CD8-positive, alpha-beta memory T cell (primary cell): ENCODE measurements at regions of chr12 and their contacts with region 1.

Region 1: GRCh38 chr12:93419388-93420034 is 22.2 kb downstream of the UBE2N start:
- DNase-seq: peak in 2 of 5 donors; percentile 38 to 47
- H3K4me3 ChIP-seq: no peak overlapping the region
- H3K4me3 Mint-ChIP-seq: no peak overlapping the region
- H3K27ac ChIP-seq: no peak overlapping the region
- H3K27ac Mint-ChIP-seq: peak overlapping the region in 5 of 8 donors; percentile 27 to 80 (median 55)
- H3K4me1 ChIP-seq: peaks cover 69% of the 10 kb centered on the region
- H3K4me1 Mint-ChIP-seq: peaks cover 74 to 96% (median 95%) of the 10 kb centered on the region in 3 donors
- H3K27me3 ChIP-seq: no peaks in the 10 kb centered on the region
- H3K27me3 Mint-ChIP-seq: no peaks in the 10 kb centered on the region

Region 2: GRCh38 chr12:92987362-92987761 is 432.1 kb before region 1 on chr12:
- CTCF ChIA-PET with region 1: interaction called, 36 read pairs
- POLR2A ChIA-PET with region 1: no interaction called
- DNase-seq: peak in 2 of 5 donors; percentile 41 to 51
- H3K4me3 ChIP-seq: no peak overlapping the region
- H3K4me3 Mint-ChIP-seq: peak overlapping the region in 1 of 7 donors; percentile 51
- H3K27ac ChIP-seq: no peak overlapping the region
- H3K27ac Mint-ChIP-seq: peak overlapping the region in 2 of 8 donors; percentile 27 to 82
- H3K4me1 ChIP-seq: peaks cover 8% of the 10 kb centered on the region
- H3K4me1 Mint-ChIP-seq: peaks cover 8 to 11% (median 10%) of the 10 kb centered on the region in 3 donors
- H3K27me3 ChIP-seq: no peaks in the 10 kb centered on the region
- H3K27me3 Mint-ChIP-seq: peaks cover 1 to 13% of the 10 kb centered on the region in 2 donors

Region 3: DNA sequence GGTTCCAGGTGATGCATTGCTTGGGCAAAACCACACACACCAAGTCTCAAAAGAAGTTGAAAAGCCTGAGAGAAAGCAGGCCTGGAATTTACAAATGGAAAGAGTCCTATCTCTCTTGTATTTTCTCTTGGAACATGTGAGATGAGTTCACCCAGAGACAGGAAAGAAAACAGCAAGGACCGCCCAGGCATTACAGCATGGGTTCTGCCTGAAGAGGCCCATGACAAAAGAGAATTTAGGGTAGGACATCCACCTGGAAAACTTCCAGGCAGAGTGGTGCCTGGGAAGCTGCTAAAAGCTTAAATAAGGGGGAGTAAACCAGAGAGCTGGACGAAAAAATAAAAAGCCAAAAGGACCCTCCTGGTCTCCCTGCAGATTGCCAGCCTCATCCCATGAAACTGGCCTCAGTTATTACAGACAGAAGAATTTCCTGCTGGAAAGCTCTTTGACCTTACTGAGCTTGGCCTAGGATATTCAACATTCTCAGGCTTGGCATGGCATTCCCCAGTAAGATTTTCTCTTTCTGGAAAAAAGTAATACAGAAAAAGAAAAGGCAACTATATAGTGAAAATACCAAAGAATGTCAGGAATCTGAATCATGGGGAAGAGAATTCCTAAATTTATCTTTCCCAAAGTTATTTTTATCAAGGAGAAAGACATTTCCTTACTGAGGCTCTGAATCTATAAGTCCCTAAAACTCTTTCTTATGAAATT is 163.1 kb before region 1 on chr12:
- CTCF ChIA-PET with region 1: no interaction called
- POLR2A ChIA-PET with region 1: no interaction called
- DNase-seq: no peak
- H3K4me3 ChIP-seq: no peak overlapping the region
- H3K4me3 Mint-ChIP-seq: no peak overlapping the region
- H3K27ac ChIP-seq: no peak overlapping the region
- H3K27ac Mint-ChIP-seq: no peak overlapping the region
- H3K4me1 ChIP-seq: no peaks in the 10 kb centered on the region
- H3K4me1 Mint-ChIP-seq: no peaks in the 10 kb centered on the region
- H3K27me3 ChIP-seq: no peaks in the 10 kb centered on the region
- H3K27me3 Mint-ChIP-seq: peaks cover 2 to 3% of the 10 kb centered on the region in 2 donors

Region 4: GRCh38 chr12:93368766-93369165 is 50.7 kb before region 1 on chr12:
- CTCF ChIA-PET with region 1: no interaction called
- POLR2A ChIA-PET with region 1: no interaction called
- DNase-seq: no peak
- H3K4me3 ChIP-seq: no peak overlapping the region
- H3K4me3 Mint-ChIP-seq: no peak overlapping the region
- H3K27ac ChIP-seq: no peak overlapping the region
- H3K27ac Mint-ChIP-seq: no peak overlapping the region
- H3K4me1 ChIP-seq: peaks cover 8% of the 10 kb centered on the region
- H3K4me1 Mint-ChIP-seq: peaks cover 6 to 12% (median 9%) of the 10 kb centered on the region in 3 donors
- H3K27me3 ChIP-seq: no peaks in the 10 kb centered on the region
- H3K27me3 Mint-ChIP-seq: peaks cover 2 to 4% of the 10 kb centered on the region in 2 donors

Region 5: DNA sequence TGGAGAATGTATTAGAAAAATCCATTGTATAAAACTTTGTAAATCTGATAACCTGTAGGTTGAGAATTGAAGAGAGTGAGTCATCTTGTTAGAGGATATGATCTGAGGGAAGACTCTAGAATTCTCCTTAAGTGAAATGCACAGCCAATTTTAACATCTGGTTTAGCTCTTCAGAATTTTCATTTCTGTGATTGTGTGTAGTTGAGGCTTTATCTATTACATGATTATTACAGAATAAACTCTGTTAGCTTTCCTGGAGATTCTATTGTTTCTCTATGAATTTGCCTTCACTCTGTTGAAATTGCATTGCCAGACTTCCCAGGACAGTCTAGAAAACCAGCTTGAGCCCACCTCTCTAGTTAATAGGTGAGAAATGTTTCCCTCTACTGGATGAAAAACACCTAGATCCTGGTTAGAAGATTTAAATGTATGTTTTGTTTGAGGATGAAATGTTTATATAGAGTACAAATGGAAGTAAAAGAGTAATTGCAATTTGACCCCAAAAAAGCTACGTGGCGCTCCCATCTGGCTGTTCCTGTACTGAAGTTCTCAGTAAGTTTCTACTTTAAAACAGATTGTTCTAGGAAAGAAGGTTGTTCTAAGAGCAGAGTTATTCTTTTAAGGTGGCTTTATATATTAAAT is 38.9 kb before region 1 on chr12:
- CTCF ChIA-PET with region 1: interaction called, 12 read pairs
- POLR2A ChIA-PET with region 1: no interaction called
- DNase-seq: no peak
- H3K4me3 ChIP-seq: peak overlapping the region; percentile 78
- H3K4me3 Mint-ChIP-seq: peak overlapping the region; percentile 93 to 100 (median 99)
- H3K27ac ChIP-seq: peak overlapping the region; percentile 93
- H3K27ac Mint-ChIP-seq: peak overlapping the region; percentile 30 to 99 (median 84)
- H3K4me1 ChIP-seq: peaks cover 45% of the 10 kb centered on the region
- H3K4me1 Mint-ChIP-seq: peaks cover 48 to 68% (median 61%) of the 10 kb centered on the region in 3 donors
- H3K27me3 ChIP-seq: no peaks in the 10 kb centered on the region
- H3K27me3 Mint-ChIP-seq: no peaks in the 10 kb centered on the region

Region 6: GRCh38 chr12:93441617-93442410 is 22.3 kb after region 1 on chr12 and contains the start of gene UBE2N:
- CTCF ChIA-PET with region 1: interaction called, 12 read pairs
- POLR2A ChIA-PET with region 1: interaction called, 15 read pairs
- DNase-seq: peak; percentile 95 to 98 (median 96)
- H3K4me3 ChIP-seq: peak within 1 kb of the TSS; percentile 68
- H3K4me3 Mint-ChIP-seq: peak within 1 kb of the TSS; percentile 93 to 98 (median 96)
- H3K27ac ChIP-seq: peak within 1 kb of the TSS; percentile 82
- H3K27ac Mint-ChIP-seq: peak within 1 kb of the TSS; percentile 92 to 100 (median 98)
- H3K4me1 ChIP-seq: peaks cover 45% of the 10 kb centered on the region
- H3K4me1 Mint-ChIP-seq: peaks cover 46 to 52% (median 50%) of the 10 kb centered on the region in 3 donors
- H3K27me3 ChIP-seq: no peaks in the 10 kb centered on the region
- H3K27me3 Mint-ChIP-seq: peaks cover 0 to 1% of the 10 kb centered on the region in 2 donors
- total RNA-seq, gene UBE2N: 236 to 244 TPM